Gastrocnemius medialis (tissue), 4 donors: ENCODE measurements at regions of chr2 and their contacts with region 1.

Region 1: GRCh38 chr2:62713837-62714236 is 8.3 kb downstream of the EHBP1 start:
- DNase-seq: no peak
- ATAC-seq: no peak
- H3K4me3 ChIP-seq: no peak overlapping the region
- H3K27ac ChIP-seq: no peak overlapping the region
- H3K4me1 ChIP-seq: peaks cover 2 to 8% of the 10 kb centered on the region in 2 donors
- H3K27me3 ChIP-seq: no peaks in the 10 kb centered on the region
- CTCF ChIP-seq: no peak
- POLR2A ChIP-seq: no peak

Region 2: GRCh38 chr2:62731275-62731674 is 17.4 kb after region 1 on chr2:
- in situ Hi-C with region 1: no loop called
- intact Hi-C with region 1: loop called (anchors 2 kb)
- DNase-seq: no peak
- ATAC-seq: no peak
- H3K4me3 ChIP-seq: no peak overlapping the region
- H3K27ac ChIP-seq: no peak overlapping the region
- H3K4me1 ChIP-seq: no peaks in the 10 kb centered on the region
- H3K27me3 ChIP-seq: no peaks in the 10 kb centered on the region
- CTCF ChIP-seq: no peak
- POLR2A ChIP-seq: no peak